OCI-LY7 (cell line): ENCODE measurements at regions of chr9 and their contacts with region 1.

Region 1: GRCh38 chr9:96363175-96363967 is 20.1 kb downstream of the SLC35D2 start:
- DNase-seq: no peak
- H3K4me3 ChIP-seq: no peak overlapping the region
- H3K27ac ChIP-seq: no peak overlapping the region
- H3K4me1 ChIP-seq: no peaks in the 10 kb centered on the region
- CTCF ChIP-seq: no peak

Region 2: GRCh38 chr9:96376891-96377874 is 13.8 kb after region 1 on chr9:
- CTCF ChIA-PET with region 1: no interaction called
- POLR2A ChIA-PET with region 1: interaction called, 11 read pairs
- intact Hi-C with region 1: no loop called
- DNase-seq: no peak
- H3K4me3 ChIP-seq: no peak overlapping the region
- H3K27ac ChIP-seq: no peak overlapping the region
- H3K4me1 ChIP-seq: no peaks in the 10 kb centered on the region
- CTCF ChIP-seq: no peak